T-cell (primary cell): ENCODE measurements at regions of chr3 and their contacts with region 1.

Region 1: DNA sequence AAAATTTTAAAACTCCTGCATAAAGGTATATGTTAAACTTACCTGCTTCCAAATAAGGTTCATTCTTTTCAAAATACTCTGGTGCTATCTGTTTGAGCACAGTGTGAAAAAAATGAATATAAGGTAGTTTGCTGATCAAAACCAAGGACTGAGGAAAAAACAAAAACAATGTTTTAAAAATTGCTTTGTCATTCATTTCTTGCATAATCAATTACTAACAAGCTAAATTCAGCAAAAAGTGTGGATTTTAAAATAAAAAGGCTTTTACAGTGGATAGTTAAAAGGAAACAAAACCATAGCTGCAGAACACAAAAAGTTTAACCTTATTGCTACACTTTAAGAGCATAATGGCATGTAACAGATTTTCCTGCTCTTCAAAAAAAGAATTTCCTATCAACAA is 31.5 kb downstream of the DENND6A start:
- DNase-seq: no peak
- ATAC-seq: no peak
- H3K4me3 ChIP-seq: no peak overlapping the region
- H3K4me3 Mint-ChIP-seq: no peak overlapping the region
- H3K27ac ChIP-seq: no peak overlapping the region
- H3K27ac Mint-ChIP-seq: peak overlapping the region in 1 of 2 donors; percentile 25
- H3K4me1 ChIP-seq: no peaks in the 10 kb centered on the region
- H3K4me1 Mint-ChIP-seq: peaks cover 4 to 6% (median 5%) of the 10 kb centered on the region in 3 donors
- H3K27me3 ChIP-seq: no peaks in the 10 kb centered on the region
- H3K27me3 Mint-ChIP-seq: no peaks in the 10 kb centered on the region

Region 2: GRCh38 chr3:55968331-55968730 is 1693.1 kb before region 1 on chr3:
- CTCF ChIA-PET with region 1: no interaction called
- POLR2A ChIA-PET with region 1: no interaction called
- DNase-seq: no peak
- ATAC-seq: no peak
- H3K4me3 ChIP-seq: no peak overlapping the region
- H3K4me3 Mint-ChIP-seq: no peak overlapping the region
- H3K27ac ChIP-seq: no peak overlapping the region
- H3K27ac Mint-ChIP-seq: no peak overlapping the region
- H3K4me1 ChIP-seq: no peaks in the 10 kb centered on the region
- H3K4me1 Mint-ChIP-seq: no peaks in the 10 kb centered on the region
- H3K27me3 ChIP-seq: no peaks in the 10 kb centered on the region
- H3K27me3 Mint-ChIP-seq: no peaks in the 10 kb centered on the region

Region 3: GRCh38 chr3:57569859-57570450 is 91.4 kb before region 1 on chr3:
- CTCF ChIA-PET with region 1: no interaction called
- POLR2A ChIA-PET with region 1: interaction called in 1 of 2 experiments, 10 read pairs
- DNase-seq: no peak
- ATAC-seq: peak in 1 of 4 experiments; percentile 12
- H3K4me3 ChIP-seq: no peak overlapping the region
- H3K4me3 Mint-ChIP-seq: no peak overlapping the region
- H3K27ac ChIP-seq: no peak overlapping the region
- H3K27ac Mint-ChIP-seq: no peak overlapping the region
- H3K4me1 ChIP-seq: no peaks in the 10 kb centered on the region
- H3K4me1 Mint-ChIP-seq: peaks cover 0 to 8% (median 7%) of the 10 kb centered on the region in 3 donors
- H3K27me3 ChIP-seq: no peaks in the 10 kb centered on the region
- H3K27me3 Mint-ChIP-seq: no peaks in the 10 kb centered on the region

Region 4: GRCh38 chr3:57675530-57675929 is 14.1 kb after region 1 on chr3:
- CTCF ChIA-PET with region 1: no interaction called
- POLR2A ChIA-PET with region 1: interaction called in 1 of 2 experiments, 10 read pairs
- DNase-seq: no peak
- ATAC-seq: no peak
- H3K4me3 ChIP-seq: no peak overlapping the region
- H3K4me3 Mint-ChIP-seq: no peak overlapping the region
- H3K27ac ChIP-seq: no peak overlapping the region
- H3K27ac Mint-ChIP-seq: peak overlapping the region in 1 of 2 donors; percentile 76
- H3K4me1 ChIP-seq: peaks cover 14 to 19% of the 10 kb centered on the region in 2 experiments
- H3K4me1 Mint-ChIP-seq: peaks cover 66 to 68% (median 67%) of the 10 kb centered on the region in 3 donors
- H3K27me3 ChIP-seq: no peaks in the 10 kb centered on the region
- H3K27me3 Mint-ChIP-seq: no peaks in the 10 kb centered on the region